Activated T-helper 1 cell treated with anti-CD3 and anti-CD28 coated beads, Interleukin-12 subunit alpha, Interleukin-12 subunit beta, Interleukin-2, Interleukin-4 antibody, amounts not matched to agents 30 ng/mL and 10 ng/mL and 1 ng/mL, durations not matched to agents 14 hours and 24 hours and 36 hours (primary cell): ENCODE measurements at regions of chr1 and their contacts with region 1.

Region 1: GRCh38 chr1:199551967-199552565 is 475.4 kb upstream of the NR5A2 start:
- DNase-seq: no peak
- H3K4me3 Mint-ChIP-seq: no peak overlapping the region
- H3K27ac Mint-ChIP-seq: no peak overlapping the region
- H3K4me1 Mint-ChIP-seq: no peaks in the 10 kb centered on the region
- H3K27me3 Mint-ChIP-seq: peaks cover 6% of the 10 kb centered on the region

Region 2: GRCh38 chr1:198699167-198700015 is 852.7 kb before region 1 on chr1:
- intact Hi-C with region 1: loop called (anchors 10 kb)
- DNase-seq: peak; percentile 53
- H3K4me3 Mint-ChIP-seq: no peak overlapping the region
- H3K27ac Mint-ChIP-seq: peak overlapping the region; percentile 74
- H3K4me1 Mint-ChIP-seq: peaks cover 81% of the 10 kb centered on the region
- H3K27me3 Mint-ChIP-seq: no peaks in the 10 kb centered on the region

Region 3: GRCh38 chr1:198771563-198772153 is 780.4 kb before region 1 on chr1:
- intact Hi-C with region 1: loop called (anchors 5 kb)
- DNase-seq: no peak
- H3K4me3 Mint-ChIP-seq: no peak overlapping the region
- H3K27ac Mint-ChIP-seq: no peak overlapping the region
- H3K4me1 Mint-ChIP-seq: peaks cover 11% of the 10 kb centered on the region
- H3K27me3 Mint-ChIP-seq: peaks cover 5% of the 10 kb centered on the region

Region 4: DNA sequence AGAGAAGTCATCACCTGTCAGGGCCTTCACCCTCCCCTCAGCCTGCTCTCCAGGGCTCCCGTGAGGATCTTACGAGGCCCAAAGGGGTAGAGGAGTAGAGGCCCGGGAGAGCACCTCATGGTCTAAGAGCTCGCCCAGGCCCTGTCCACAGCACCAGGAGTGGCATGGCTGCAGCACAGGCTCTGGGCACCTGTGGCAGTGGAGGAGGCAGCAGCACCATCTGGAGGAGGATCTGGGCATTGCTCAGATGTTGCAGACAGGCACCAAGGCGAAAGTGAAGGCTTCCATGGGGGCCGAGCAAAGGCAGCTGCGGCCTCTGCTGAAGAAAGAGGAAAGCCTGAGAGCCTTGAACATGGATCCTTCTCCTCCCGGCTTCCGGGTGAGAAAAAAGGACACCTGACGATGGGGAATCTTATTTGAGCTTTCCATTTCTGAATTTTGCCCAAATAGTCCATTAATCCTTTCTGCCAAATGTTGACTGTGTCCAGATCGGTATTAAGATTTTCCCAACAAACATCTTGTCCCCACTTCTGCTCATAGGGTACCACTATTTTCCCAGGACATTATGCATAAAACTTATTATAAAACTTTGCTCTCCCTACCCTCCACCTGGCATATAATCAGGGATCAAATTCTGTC is 308.5 kb before region 1 on chr1:
- intact Hi-C with region 1: loop called (anchors 2 kb)
- DNase-seq: peak; percentile 70
- H3K4me3 Mint-ChIP-seq: no peak overlapping the region
- H3K27ac Mint-ChIP-seq: no peak overlapping the region
- H3K4me1 Mint-ChIP-seq: peaks cover 18% of the 10 kb centered on the region
- H3K27me3 Mint-ChIP-seq: peaks cover 19% of the 10 kb centered on the region